Lower leg skin (tissue), 4 donors: ENCODE measurements at regions of chr5 and their contacts with region 1.

Region 1: GRCh38 chr5:149551200-149552037 is at the start of gene CSNK1A1:
- DNase-seq: peak; percentile 97 to 100
- H3K4me3 ChIP-seq: peak within 1 kb of the TSS; percentile 97
- CTCF ChIP-seq: peak in 1 of 3 donors; percentile 79
- POLR2A ChIP-seq: peak in 1 of 2 donors; percentile 71
- total RNA-seq, gene CSNK1A1: 270 to 297 (median 282) TPM

Region 2: DNA sequence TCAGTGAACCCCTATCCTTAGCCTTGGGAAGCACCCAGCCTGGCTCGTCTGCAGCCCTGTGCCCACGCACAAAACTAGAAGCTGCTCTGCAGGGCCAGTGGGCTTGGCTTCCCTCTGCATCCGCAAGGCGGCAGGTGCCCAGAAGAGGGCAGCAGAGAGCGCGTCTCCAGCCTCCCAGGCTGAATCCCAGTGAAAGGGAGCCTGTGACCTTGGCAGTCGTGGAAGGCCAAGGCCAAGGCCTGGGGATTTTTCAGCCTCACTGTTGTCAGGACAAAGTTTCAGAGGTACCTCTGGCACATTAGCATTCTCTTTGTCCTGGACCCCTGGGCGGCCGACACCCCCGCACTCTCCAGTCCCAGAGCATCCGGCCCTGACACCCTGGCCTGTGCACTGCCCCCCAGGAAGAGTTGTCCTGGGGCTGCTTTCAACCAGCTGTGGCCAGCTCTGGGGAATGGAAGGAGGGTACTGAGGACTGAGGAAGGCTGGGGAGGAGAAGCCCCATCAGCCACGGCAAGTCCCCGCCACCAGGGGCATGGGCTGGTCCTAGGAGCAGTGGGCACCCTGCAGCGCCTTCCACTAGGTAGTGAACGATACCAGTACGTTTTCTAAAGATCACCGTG is 108.7 kb before region 1 on chr5:
- intact Hi-C with region 1: loop called (anchors 5 kb)
- DNase-seq: peak; percentile 75 to 96
- H3K4me3 ChIP-seq: no peak overlapping the region
- CTCF ChIP-seq: peak in 1 of 3 donors; percentile 91
- POLR2A ChIP-seq: no peak